ENCODE measurements at regions of chr17 and their contacts with region 1.

Region 1: GRCh38 chr17:30796016-30796415 is 28.5 kb downstream of the CRLF3 start:
- DNase-seq: no peak
- H3K4me3 Mint-ChIP-seq: no peak overlapping the region
- H3K27ac Mint-ChIP-seq: peak overlapping the region; percentile 82
- H3K4me1 Mint-ChIP-seq: peaks cover 17% of the 10 kb centered on the region
- H3K27me3 Mint-ChIP-seq: no peaks in the 10 kb centered on the region

Region 2: GRCh38 chr17:30696234-30696633 is 99.8 kb before region 1 on chr17:
- CTCF ChIA-PET with region 1: no interaction called
- POLR2A ChIA-PET with region 1: no interaction called
- intact Hi-C with region 1: no loop called
- DNase-seq: no peak
- H3K4me3 Mint-ChIP-seq: no peak overlapping the region
- H3K27ac Mint-ChIP-seq: no peak overlapping the region
- H3K4me1 Mint-ChIP-seq: peaks cover 8% of the 10 kb centered on the region
- H3K27me3 Mint-ChIP-seq: peaks cover 4% of the 10 kb centered on the region

Region 3: DNA sequence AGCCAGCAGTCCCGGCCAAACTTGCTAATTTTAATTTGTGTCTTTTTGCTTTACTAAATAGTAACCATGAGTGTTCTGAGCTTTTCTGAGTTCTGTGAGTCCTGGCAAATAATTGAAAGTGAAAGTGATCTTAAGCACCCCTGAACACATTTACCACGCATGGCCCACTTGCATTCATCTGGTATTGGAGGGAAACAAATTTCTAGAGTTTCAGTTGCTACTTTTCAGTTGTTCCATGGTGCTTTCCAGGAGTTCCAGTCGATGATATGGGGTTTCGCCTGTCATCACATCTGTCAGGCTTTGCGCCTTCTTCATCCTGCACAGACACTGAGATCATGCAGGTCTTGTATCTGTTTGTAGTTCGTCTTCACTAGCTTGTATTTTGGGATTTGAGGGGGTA is 15.7 kb before region 1 on chr17:
- CTCF ChIA-PET with region 1: no interaction called
- POLR2A ChIA-PET with region 1: no interaction called
- intact Hi-C with region 1: loop called (anchors 2 kb)
- DNase-seq: peak; percentile 55
- H3K4me3 Mint-ChIP-seq: peak overlapping the region; percentile 38
- H3K27ac Mint-ChIP-seq: peak overlapping the region; percentile 88
- H3K4me1 Mint-ChIP-seq: peaks cover 18% of the 10 kb centered on the region
- H3K27me3 Mint-ChIP-seq: no peaks in the 10 kb centered on the region

Region 4: DNA sequence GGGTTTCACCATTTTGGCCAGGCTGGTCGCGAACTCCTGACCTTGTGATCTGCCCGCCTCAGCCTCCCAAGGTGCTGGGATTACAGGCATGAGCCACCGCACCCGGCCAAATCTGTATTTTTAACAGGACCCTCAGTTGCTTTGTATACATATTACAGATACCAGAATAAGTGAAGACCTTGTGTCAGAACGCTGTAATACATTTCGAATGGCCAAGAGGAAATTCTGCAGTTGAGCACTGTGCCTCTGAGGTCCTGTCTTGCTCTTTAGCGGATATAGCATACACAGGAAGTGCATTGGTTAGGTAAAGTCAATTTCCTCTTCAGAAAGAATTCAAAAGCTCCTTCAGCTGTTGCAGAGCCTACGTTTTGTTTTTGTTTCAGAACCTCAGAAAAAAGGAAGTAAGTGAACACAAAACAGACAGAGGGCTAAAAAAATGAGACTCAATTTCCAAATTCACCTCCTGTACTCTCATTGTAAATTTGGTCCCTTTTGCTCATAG is 12.8 kb after region 1 on chr17:
- CTCF ChIA-PET with region 1: interaction called, 4 read pairs
- POLR2A ChIA-PET with region 1: interaction called, 3 read pairs
- intact Hi-C with region 1: loop called (anchors 1 kb)
- DNase-seq: peak; percentile 45
- H3K4me3 Mint-ChIP-seq: peak overlapping the region; percentile 79
- H3K27ac Mint-ChIP-seq: peak overlapping the region; percentile 94
- H3K4me1 Mint-ChIP-seq: peaks cover 65% of the 10 kb centered on the region
- H3K27me3 Mint-ChIP-seq: no peaks in the 10 kb centered on the region

Region 5: GRCh38 chr17:30906101-30906911 is 110.3 kb after region 1 on chr17 and contains the start of gene TEFM:
- CTCF ChIA-PET with region 1: no interaction called
- POLR2A ChIA-PET with region 1: no interaction called
- intact Hi-C with region 1: no loop called
- DNase-seq: peak; percentile 95
- H3K4me3 Mint-ChIP-seq: peak within 1 kb of the TSS; percentile 93
- H3K27ac Mint-ChIP-seq: peak within 1 kb of the TSS; percentile 81
- H3K4me1 Mint-ChIP-seq: peaks cover 45% of the 10 kb centered on the region
- H3K27me3 Mint-ChIP-seq: no peaks in the 10 kb centered on the region
- total RNA-seq, gene TEFM: 9.7 to 11.4 TPM